Activated naive CD4-positive, alpha-beta T cell treated with anti-CD3 and anti-CD28 coated beads, Interleukin-2, amount 10 ng/mL, durations not matched to agents 7 days and 5 days (primary cell): ENCODE measurements at regions of chr16 and their contacts with region 1.

Region 1: DNA sequence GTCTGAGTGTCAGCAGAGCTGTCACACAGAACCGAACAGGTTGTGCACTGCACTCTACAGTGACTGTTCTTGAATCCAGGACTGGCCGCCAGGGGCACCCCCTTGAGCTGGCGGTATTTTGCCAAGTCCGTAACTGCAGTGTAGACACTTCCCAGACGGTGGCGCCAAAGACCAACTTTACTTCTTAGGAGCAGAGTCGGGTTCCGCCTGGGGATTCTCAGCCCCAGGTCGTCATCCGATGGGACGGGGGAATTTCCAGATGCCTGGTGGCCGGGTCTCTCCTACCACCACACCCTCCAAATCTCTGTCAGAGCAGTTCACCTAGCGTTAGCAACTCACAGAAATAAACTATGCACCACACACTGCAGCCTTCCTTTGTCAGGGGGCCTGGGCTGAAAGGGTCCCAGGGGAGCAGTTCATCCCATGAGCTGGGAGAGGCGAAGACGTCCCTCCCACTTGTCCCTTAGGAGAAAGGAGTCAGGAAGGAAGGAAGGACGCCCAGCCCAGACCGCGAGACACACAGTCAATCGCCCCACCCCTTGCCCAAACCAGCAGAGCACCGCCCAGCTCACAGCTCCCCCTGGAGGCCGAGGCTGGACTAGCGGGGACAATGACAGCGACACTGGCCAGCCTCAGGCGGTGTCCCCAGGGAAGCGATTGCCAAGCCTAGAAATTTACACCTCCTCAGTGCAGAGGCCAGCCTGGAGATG is 7.4 kb upstream of the RIPOR1 start:
- DNase-seq: peak; percentile 99
- H3K4me3 Mint-ChIP-seq: peak overlapping the region; percentile 81
- H3K27ac Mint-ChIP-seq: peak overlapping the region; percentile 97
- H3K4me1 Mint-ChIP-seq: peaks cover 50% of the 10 kb centered on the region
- H3K27me3 Mint-ChIP-seq: peaks cover 65% of the 10 kb centered on the region

Region 2: GRCh38 chr16:67296422-67296821 is 224.8 kb before region 1 on chr16:
- CTCF ChIA-PET with region 1: no interaction called
- DNase-seq: no peak
- H3K4me3 Mint-ChIP-seq: no peak overlapping the region
- H3K27ac Mint-ChIP-seq: no peak overlapping the region
- H3K4me1 Mint-ChIP-seq: no peaks in the 10 kb centered on the region
- H3K27me3 Mint-ChIP-seq: peaks cover 36% of the 10 kb centered on the region

Region 3: DNA sequence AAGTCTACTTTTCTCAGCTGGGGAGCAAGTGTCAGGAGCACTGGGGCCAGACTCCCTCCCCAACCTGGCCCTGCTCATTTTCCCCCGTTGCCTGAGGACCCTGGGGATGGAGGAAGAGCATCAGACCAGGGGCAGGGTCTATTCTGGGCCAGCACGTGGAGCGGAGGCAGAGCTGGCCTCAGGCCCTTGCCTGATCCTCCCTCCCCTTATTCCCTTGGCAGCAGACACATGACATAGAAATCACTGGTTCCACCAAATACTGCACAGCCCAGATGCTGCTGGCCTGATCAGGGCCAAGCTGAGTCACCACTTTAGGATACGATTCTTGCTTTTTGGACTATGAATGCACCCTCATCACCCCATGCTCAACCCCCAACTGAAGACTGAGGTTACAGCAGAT is 22.1 kb before region 1 on chr16:
- CTCF ChIA-PET with region 1: interaction called, 167 read pairs
- DNase-seq: no peak
- H3K4me3 Mint-ChIP-seq: no peak overlapping the region
- H3K27ac Mint-ChIP-seq: peak overlapping the region; percentile 65
- H3K4me1 Mint-ChIP-seq: peaks cover 35% of the 10 kb centered on the region
- H3K27me3 Mint-ChIP-seq: no peaks in the 10 kb centered on the region

Region 4: DNA sequence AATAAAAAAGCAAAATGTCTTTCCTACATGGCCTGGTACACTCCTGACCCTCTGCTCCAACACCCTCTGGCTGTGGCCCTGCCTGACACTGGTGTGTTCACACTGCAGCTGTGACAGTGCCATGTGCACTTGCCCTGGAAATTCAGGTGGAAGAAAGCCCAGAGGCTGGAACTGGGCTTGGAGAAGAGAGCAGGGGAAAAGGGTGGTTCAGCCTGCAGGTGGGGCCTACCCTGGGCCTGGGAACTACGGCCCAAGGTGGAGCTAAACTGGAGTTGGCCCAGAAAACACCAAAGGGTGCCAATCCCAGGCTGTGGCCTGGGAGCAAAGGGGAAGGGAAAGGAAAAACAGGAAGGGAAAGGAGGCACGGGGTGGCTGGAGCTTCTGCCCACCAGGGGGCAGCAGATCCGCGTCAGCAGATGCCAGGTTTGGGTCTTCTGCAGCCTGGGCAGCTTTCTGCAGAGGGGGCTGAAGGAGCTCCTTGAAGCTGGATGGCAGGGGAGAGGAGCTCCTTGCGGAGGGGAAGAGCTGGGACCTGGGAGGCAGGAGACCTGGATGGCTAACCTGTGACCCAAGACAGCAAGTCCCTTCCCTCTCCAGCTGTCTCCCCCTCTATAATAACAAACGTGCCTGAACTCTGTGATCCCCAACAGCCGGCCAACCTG is 25.6 kb after region 1 on chr16:
- CTCF ChIA-PET with region 1: interaction called, 31 read pairs
- DNase-seq: peak; percentile 85
- H3K4me3 Mint-ChIP-seq: peak overlapping the region; percentile 73
- H3K27ac Mint-ChIP-seq: peak overlapping the region; percentile 100
- H3K4me1 Mint-ChIP-seq: peaks cover 73% of the 10 kb centered on the region
- H3K27me3 Mint-ChIP-seq: no peaks in the 10 kb centered on the region

Region 5: GRCh38 chr16:67632415-67633172 is 111.3 kb after region 1 on chr16:
- CTCF ChIA-PET with region 1: interaction called, 10 read pairs
- DNase-seq: no peak
- H3K4me3 Mint-ChIP-seq: no peak overlapping the region
- H3K27ac Mint-ChIP-seq: no peak overlapping the region
- H3K4me1 Mint-ChIP-seq: no peaks in the 10 kb centered on the region
- H3K27me3 Mint-ChIP-seq: no peaks in the 10 kb centered on the region

Region 6: GRCh38 chr16:67660564-67661028 is 139.3 kb after region 1 on chr16 and contains the start of gene PARD6A:
- CTCF ChIA-PET with region 1: interaction called, 151 read pairs
- DNase-seq: peak; percentile 98
- H3K4me3 Mint-ChIP-seq: peak within 1 kb of the TSS; percentile 95
- H3K27ac Mint-ChIP-seq: peak within 1 kb of the TSS; percentile 97
- H3K4me1 Mint-ChIP-seq: peaks cover 34% of the 10 kb centered on the region
- H3K27me3 Mint-ChIP-seq: no peaks in the 10 kb centered on the region

Region 7: GRCh38 chr16:67672739-67673662 is 151.8 kb after region 1 on chr16:
- CTCF ChIA-PET with region 1: interaction called, 151 read pairs
- DNase-seq: peak; percentile 82
- H3K4me3 Mint-ChIP-seq: no peak overlapping the region
- H3K27ac Mint-ChIP-seq: peak overlapping the region; percentile 58
- H3K4me1 Mint-ChIP-seq: peaks cover 13% of the 10 kb centered on the region
- H3K27me3 Mint-ChIP-seq: no peaks in the 10 kb centered on the region